Dendritic cell treated with granulocyte-macrophage colony-stimulating factor and Interleukin-4, amounts not matched to agents 40 ng/mL and 50 ng/mL, for 4 days (primary cell): ENCODE measurements at regions of chr15 and their contacts with region 1.

Region 1: GRCh38 chr15:55290528-55291057 is 980 bp upstream of the RAB27A start:
- H3K4me3 Mint-ChIP-seq: peak overlapping the region; percentile 88
- H3K27ac Mint-ChIP-seq: peak overlapping the region; percentile 94
- H3K4me1 Mint-ChIP-seq: peaks cover 38% of the 10 kb centered on the region
- H3K27me3 Mint-ChIP-seq: no peaks in the 10 kb centered on the region

Region 2: DNA sequence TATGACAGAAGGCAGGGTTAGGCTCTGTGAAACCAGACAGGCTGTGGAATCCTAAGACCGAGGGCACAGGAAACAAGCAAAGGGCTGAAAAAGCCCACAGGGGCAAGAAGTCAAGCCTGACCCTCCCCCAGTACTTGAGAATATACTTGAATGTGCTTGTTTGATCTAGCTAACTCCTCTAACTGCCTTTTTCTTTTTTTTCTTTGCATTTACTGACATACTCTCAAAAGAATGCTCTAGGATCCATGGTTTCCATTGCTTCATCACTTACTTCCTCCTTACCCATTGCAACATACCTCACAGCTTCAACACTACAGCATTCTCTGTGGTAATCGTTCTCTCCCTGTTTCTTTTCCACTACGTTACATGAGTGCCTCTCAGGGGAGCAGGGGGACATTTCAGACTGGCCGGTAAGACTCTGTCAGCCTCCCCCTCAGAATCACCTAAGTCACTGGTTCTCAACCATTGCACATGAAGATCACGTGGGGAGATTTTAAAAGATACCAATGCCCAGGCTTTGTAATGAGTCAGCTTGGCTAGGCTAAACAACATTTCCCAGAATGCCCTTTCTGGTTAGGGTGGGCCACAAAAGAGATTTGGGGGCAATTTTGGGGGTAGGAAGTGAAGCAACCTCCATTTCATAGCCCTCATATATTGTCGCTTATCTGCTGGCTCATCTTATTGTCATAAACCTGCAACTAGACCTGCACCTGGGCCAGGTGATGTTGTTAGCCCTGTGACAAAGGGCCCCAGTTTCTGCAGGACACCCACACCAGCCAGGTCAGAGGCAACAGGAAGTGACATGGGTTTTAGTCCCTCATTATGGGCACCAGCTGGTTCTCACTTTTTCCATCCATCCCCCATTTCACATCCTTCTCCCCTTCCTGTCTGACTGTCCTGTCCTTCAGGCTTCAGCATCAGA is 69.2 kb before region 1 on chr15:
- intact Hi-C with region 1: loop called (anchors 1 kb)
- H3K4me3 Mint-ChIP-seq: peak overlapping the region; percentile 61
- H3K27ac Mint-ChIP-seq: peak overlapping the region; percentile 65
- H3K4me1 Mint-ChIP-seq: peaks cover 39% of the 10 kb centered on the region
- H3K27me3 Mint-ChIP-seq: no peaks in the 10 kb centered on the region

Region 3: GRCh38 chr15:55250392-55250791 is 40.2 kb before region 1 on chr15:
- intact Hi-C with region 1: loop called (anchors 5 kb)
- H3K4me3 Mint-ChIP-seq: no peak overlapping the region
- H3K27ac Mint-ChIP-seq: peak overlapping the region; percentile 70
- H3K4me1 Mint-ChIP-seq: peaks cover 65% of the 10 kb centered on the region
- H3K27me3 Mint-ChIP-seq: no peaks in the 10 kb centered on the region

Region 4: DNA sequence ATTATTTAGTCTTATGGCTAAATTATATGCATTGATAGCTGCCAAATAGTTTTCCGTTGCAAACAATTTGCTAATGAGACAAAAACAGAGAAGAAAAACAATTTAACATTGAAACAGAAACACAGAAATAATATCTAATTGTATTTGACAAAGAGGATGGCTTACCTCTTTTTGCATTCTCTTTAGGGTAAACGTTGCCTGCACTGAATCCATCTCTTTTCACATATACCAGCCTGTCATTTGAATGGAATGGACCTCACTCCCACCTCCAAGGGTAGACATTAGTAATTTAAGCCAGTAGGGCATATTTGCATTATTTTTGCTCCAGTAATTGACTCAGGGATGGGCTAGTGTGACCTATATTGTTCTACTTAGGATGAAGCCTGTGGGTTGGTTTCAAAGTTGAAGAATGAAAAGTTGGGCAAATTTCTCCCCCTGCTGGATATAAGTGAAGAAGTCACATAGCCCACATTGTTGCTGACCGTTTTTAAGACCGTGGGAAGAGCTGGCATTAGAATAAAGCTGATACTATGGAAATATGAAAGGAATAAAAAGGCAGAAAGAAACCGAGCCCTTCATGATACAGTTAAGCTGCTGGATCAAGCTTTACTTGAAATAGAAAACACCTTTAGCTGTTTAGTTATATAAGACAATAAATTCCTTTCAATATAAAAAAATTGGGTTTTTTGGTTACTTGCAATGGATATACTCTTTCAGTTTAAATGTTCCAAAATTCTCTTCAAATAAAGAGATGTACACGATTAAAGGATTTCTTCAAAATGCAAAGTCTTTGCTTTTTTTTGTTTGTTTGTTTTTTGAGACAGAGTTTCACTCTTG is 144.6 kb after region 1 on chr15:
- intact Hi-C with region 1: loop called (anchors 2 kb)
- H3K4me3 Mint-ChIP-seq: no peak overlapping the region
- H3K27ac Mint-ChIP-seq: no peak overlapping the region
- H3K4me1 Mint-ChIP-seq: no peaks in the 10 kb centered on the region
- H3K27me3 Mint-ChIP-seq: no peaks in the 10 kb centered on the region